PC-9 (cell line): ENCODE measurements at regions of chr17 and their contacts with region 1.

Region 1: DNA sequence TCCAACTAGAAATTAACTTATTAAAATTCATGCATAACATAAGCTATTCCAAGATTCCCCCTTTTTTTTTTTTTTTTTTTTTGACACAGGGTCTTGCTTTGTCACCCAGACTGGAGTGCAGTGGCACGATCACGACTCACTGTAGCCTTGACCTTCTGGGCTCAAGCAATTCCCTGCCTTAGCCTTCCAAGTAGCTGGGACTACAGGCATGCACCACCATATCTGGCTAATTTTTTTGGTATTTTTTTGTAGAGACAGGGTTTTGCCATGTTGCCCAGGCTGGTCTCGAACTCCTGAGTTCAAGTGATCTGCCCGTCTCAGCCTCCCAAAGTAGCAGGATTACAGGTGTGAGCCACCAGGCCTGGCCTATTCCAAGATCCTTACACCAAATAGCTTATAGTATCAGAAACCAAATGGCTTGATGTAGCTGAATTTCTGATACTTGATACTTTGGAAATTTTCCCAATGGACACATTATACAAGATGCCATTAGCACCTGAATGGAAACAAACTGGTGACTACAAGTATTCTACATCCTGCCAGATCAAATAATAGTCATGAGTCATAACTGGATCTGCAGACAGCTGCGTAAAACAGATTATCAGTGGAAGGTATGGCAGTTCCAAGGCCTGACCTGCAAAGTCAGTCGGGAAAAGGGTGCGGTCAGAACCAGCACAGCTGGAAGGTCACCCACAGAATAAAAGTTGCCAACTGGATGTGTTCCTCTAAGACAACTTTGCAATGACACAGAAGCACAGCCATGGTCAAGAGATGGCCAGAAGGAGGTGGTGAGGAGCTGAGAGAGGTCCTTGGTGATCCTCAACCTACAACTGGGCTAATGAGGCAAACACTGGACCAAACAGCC is 14.5 kb downstream of the TUBG1 start:
- DNase-seq: peak; percentile 64 to 92
- H3K4me3 ChIP-seq: no peak overlapping the region
- H3K27ac ChIP-seq: peak overlapping the region; percentile 24; the same call in 1 of the 2 replicates
- H3K4me1 ChIP-seq: peaks cover 22% of the 10 kb centered on the region
- H3K27me3 ChIP-seq: no peaks in the 10 kb centered on the region
- CTCF ChIP-seq: no peak

Region 2: DNA sequence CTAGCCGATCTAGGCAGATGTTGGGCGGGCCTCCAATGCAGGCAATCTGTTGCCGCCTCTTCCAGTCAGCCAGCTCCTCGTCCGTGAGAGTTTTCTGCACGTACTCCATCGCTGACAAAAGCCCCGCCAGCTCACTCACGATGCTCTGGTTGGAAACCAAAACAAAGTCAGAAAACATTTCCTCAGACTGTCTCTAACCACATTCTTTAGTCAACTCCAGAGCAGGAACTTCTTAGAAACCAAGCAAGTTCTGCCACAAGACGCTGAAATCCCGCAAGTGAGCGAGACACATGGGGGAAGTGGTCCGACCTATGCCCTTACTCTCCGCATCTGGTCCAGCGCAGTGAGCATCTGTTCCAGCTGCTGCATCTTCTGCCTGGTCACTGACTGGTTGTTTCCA is 286.5 kb before region 1 on chr17:
- CTCF ChIA-PET with region 1: no interaction called
- POLR2A ChIA-PET with region 1: interaction called, 13 read pairs
- intact Hi-C with region 1: no loop called
- DNase-seq: no peak
- H3K4me3 ChIP-seq: no peak overlapping the region
- H3K27ac ChIP-seq: no peak overlapping the region
- H3K4me1 ChIP-seq: peaks cover 12% of the 10 kb centered on the region
- H3K27me3 ChIP-seq: no peaks in the 10 kb centered on the region
- CTCF ChIP-seq: no peak

Region 3: GRCh38 chr17:42659079-42659931 is 35.3 kb after region 1 on chr17 and contains the start of gene TUBG2:
- CTCF ChIA-PET with region 1: interaction called, 4 read pairs
- POLR2A ChIA-PET with region 1: no interaction called
- intact Hi-C with region 1: loop called (anchors 5 kb)
- DNase-seq: peak; percentile 70 to 92
- H3K4me3 ChIP-seq: peak within 1 kb of the TSS; percentile 70
- H3K27ac ChIP-seq: peak within 1 kb of the TSS; percentile 49
- H3K4me1 ChIP-seq: peaks cover 41% of the 10 kb centered on the region
- H3K27me3 ChIP-seq: no peaks in the 10 kb centered on the region
- CTCF ChIP-seq: no peak
- total RNA-seq, gene TUBG2: 25.5 and 28.3 TPM in 2 replicates